ENCODE measurements at regions of chrX and their contacts with region 1.

Region 1: GRCh38 chrX:106397801-106398538 is 213.8 kb upstream of the RADX start:
- DNase-seq: no peak
- ATAC-seq: no peak

Region 2: DNA sequence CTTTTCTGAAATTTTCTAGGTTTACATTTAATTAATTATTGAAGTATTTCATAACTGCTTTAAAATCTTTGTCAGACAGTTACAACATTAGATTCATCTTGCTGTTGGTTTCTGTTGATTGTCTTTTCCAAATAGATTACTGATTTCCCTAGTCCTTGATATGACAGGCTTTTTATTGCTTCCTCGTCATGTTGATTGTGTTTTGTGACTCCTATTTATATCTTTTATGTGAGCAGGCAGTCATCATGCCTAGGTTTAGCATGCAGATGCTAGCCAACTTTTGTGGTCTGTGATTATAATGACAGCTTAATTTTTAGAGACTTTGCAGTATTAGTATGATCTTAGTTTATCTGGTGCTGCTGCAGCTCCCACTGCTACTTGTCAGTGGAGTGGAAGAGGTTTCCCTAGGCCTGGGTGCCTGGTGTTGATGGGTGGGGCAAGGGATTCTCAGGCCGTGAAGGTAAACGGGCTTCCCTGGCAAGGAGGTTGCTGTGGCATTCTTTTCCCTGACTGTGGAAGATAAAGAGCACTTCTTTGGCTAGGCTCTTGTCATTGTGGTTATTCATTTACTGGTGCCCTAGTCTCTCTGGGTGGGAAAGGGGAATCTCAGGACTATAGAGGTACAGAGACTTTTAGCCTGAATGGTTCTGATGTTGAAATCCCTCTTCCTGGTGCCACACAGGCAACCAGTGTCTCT is 425.1 kb before region 1 on chrX:
- intact Hi-C with region 1: loop called (anchors 5 kb)
- DNase-seq: no peak
- ATAC-seq: no peak

Region 3: DNA sequence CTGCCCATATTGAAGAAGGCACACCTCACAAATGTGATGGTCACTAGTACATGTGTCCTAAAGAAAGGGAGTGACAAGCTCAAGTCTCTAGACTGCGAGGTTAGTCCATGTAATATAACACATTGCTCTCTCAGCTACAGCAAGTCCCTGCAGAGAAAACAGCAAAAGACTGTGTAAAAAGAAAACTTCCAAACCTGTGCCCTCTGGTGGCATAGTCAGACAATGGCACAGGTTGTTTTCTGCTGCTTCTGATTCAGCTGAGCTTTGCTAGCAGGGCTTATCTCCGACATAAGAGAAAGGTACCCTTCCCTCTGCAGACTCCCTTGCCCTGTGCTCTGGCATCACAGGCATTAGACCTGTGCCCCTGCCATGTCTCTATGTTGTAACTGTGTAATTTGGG is 358.1 kb before region 1 on chrX:
- intact Hi-C with region 1: loop called (anchors 5 kb)
- DNase-seq: no peak
- ATAC-seq: no peak

Region 4: DNA sequence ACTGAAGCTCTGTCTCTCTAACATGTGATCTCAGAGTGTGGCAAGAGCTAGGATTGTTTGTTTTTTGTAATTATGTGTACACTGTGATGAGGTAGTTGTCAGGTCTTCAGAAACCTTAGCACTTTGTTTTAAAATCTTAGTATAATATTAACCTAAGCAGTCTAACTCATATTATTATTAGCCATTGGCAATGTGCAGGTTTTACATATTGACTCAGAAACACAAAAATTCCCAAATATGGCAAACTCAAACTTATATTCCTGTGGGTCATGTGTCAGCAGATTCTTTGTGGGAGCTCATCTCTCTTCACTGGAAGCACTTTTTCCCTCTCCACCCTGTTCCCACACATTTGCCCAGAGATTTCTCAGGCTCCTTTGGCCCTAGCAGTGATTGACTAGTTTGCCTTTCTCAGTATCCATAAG is 238.1 kb before region 1 on chrX:
- intact Hi-C with region 1: no loop called
- DNase-seq: no peak
- ATAC-seq: no peak

Region 5: DNA sequence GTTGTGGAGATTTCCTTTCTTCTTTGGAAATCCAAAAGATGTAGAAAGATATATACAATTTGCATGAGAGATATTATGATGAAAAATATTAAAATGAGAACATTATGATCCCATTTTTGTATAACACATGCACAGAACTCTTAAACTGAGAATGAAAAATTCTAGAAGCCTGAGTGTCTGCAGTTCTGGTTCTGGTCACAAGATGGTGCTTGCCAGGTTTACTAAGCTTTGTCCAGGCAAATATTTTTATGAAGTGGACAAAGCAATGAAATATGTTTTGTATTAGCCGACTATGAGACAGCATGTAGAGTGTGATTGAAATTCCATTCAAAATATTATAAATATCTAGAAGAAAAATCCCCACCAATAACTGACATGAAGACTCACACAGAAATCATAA is 227.7 kb before region 1 on chrX:
- intact Hi-C with region 1: loop called (anchors 5 kb)
- DNase-seq: no peak
- ATAC-seq: no peak

Measured in Right ventricle myocardium inferior (tissue), 1 donor.